ENCODE measurements at regions of chr5 and their contacts with region 1.

Region 1: GRCh38 chr5:122999945-123000563 is 36.5 kb downstream of the PPIC start:
- DNase-seq: peak; percentile 64
- ATAC-seq: peak; percentile 73
- H3K4me3 ChIP-seq: no peak overlapping the region
- H3K4me3 Mint-ChIP-seq: no peak overlapping the region
- H3K27ac ChIP-seq: no peak overlapping the region
- H3K27ac Mint-ChIP-seq: no peak overlapping the region
- H3K4me1 ChIP-seq: no peaks in the 10 kb centered on the region
- H3K4me1 Mint-ChIP-seq: no peaks in the 10 kb centered on the region
- H3K27me3 ChIP-seq: no peaks in the 10 kb centered on the region
- H3K27me3 Mint-ChIP-seq: no peaks in the 10 kb centered on the region
- CTCF ChIP-seq: peak; percentile 72

Region 2: GRCh38 chr5:122101636-122102285 is 898.3 kb before region 1 on chr5:
- CTCF ChIA-PET with region 1: no interaction called
- POLR2A ChIA-PET with region 1: no interaction called
- intact Hi-C with region 1: no loop called
- DNase-seq: peak; percentile 5
- ATAC-seq: no peak
- H3K4me3 ChIP-seq: no peak overlapping the region
- H3K4me3 Mint-ChIP-seq: no peak overlapping the region
- H3K27ac ChIP-seq: no peak overlapping the region
- H3K27ac Mint-ChIP-seq: no peak overlapping the region
- H3K4me1 ChIP-seq: no peaks in the 10 kb centered on the region
- H3K4me1 Mint-ChIP-seq: no peaks in the 10 kb centered on the region
- H3K27me3 ChIP-seq: no peaks in the 10 kb centered on the region
- H3K27me3 Mint-ChIP-seq: peaks cover 8% of the 10 kb centered on the region
- CTCF ChIP-seq: peak; percentile 41

Region 3: GRCh38 chr5:122500245-122501075 is 499.6 kb before region 1 on chr5:
- CTCF ChIA-PET with region 1: no interaction called
- POLR2A ChIA-PET with region 1: no interaction called
- intact Hi-C with region 1: loop called (anchors 1 kb)
- DNase-seq: peak; percentile 25
- ATAC-seq: no peak
- H3K4me3 ChIP-seq: no peak overlapping the region
- H3K4me3 Mint-ChIP-seq: no peak overlapping the region
- H3K27ac ChIP-seq: no peak overlapping the region
- H3K27ac Mint-ChIP-seq: no peak overlapping the region
- H3K4me1 ChIP-seq: no peaks in the 10 kb centered on the region
- H3K4me1 Mint-ChIP-seq: peaks cover 4% of the 10 kb centered on the region
- H3K27me3 ChIP-seq: peaks cover 0 to 2% (median 0%) of the 10 kb centered on the region in 4 experiments
- H3K27me3 Mint-ChIP-seq: peaks cover 9% of the 10 kb centered on the region
- CTCF ChIP-seq: peak; percentile 34

Region 4: DNA sequence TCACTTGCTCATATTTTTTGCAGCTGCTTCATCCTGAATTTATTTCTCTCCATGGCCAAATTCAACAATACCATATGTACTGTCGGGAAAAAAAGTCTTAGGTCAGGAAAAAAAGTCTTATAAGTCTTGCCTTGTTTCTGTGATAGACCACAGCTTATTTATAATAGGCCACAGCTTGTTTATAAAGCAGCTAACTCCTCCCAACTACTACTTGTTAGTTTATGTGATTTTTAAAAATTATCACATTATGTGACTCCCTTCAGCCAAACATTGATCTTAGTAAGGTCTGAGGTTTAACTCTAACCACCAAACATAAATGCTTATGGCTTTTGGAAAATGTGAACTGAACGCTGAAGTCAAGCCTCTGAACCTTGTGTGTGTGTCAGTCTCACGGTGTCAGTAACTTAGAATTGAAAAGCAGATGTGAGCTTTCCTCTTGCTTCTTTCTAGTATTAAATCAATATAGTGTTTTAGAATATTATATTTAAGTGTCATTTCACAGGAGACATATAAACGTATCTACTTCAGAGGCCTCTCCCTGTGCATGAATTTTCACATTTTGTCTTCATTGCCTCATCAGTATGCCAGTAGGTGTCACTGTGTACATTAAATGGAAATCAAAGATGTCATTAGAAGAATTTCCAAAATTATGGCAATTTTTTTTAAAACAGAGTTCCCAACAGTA is 103.3 kb before region 1 on chr5:
- CTCF ChIA-PET with region 1: no interaction called
- POLR2A ChIA-PET with region 1: no interaction called
- intact Hi-C with region 1: loop called (anchors 5 kb)
- DNase-seq: no peak
- ATAC-seq: no peak
- H3K4me3 ChIP-seq: no peak overlapping the region
- H3K4me3 Mint-ChIP-seq: no peak overlapping the region
- H3K27ac ChIP-seq: no peak overlapping the region
- H3K27ac Mint-ChIP-seq: no peak overlapping the region
- H3K4me1 ChIP-seq: no peaks in the 10 kb centered on the region
- H3K4me1 Mint-ChIP-seq: no peaks in the 10 kb centered on the region
- H3K27me3 ChIP-seq: no peaks in the 10 kb centered on the region
- H3K27me3 Mint-ChIP-seq: no peaks in the 10 kb centered on the region
- CTCF ChIP-seq: peak; percentile 45

Region 5: GRCh38 chr5:123476731-123477130 is 476.7 kb after region 1 on chr5:
- CTCF ChIA-PET with region 1: no interaction called
- POLR2A ChIA-PET with region 1: no interaction called
- intact Hi-C with region 1: no loop called
- DNase-seq: no peak
- ATAC-seq: no peak
- H3K4me3 ChIP-seq: no peak overlapping the region
- H3K4me3 Mint-ChIP-seq: no peak overlapping the region
- H3K27ac ChIP-seq: no peak overlapping the region
- H3K27ac Mint-ChIP-seq: no peak overlapping the region
- H3K4me1 ChIP-seq: no peaks in the 10 kb centered on the region
- H3K4me1 Mint-ChIP-seq: no peaks in the 10 kb centered on the region
- H3K27me3 ChIP-seq: peaks cover 0 to 6% (median 0%) of the 10 kb centered on the region in 4 experiments
- H3K27me3 Mint-ChIP-seq: peaks cover 17% of the 10 kb centered on the region
- CTCF ChIP-seq: no peak

Measured in B cell (primary cell).